MCF 10A (cell line): ENCODE measurements at regions of chr11 and their contacts with region 1.

Region 1: DNA sequence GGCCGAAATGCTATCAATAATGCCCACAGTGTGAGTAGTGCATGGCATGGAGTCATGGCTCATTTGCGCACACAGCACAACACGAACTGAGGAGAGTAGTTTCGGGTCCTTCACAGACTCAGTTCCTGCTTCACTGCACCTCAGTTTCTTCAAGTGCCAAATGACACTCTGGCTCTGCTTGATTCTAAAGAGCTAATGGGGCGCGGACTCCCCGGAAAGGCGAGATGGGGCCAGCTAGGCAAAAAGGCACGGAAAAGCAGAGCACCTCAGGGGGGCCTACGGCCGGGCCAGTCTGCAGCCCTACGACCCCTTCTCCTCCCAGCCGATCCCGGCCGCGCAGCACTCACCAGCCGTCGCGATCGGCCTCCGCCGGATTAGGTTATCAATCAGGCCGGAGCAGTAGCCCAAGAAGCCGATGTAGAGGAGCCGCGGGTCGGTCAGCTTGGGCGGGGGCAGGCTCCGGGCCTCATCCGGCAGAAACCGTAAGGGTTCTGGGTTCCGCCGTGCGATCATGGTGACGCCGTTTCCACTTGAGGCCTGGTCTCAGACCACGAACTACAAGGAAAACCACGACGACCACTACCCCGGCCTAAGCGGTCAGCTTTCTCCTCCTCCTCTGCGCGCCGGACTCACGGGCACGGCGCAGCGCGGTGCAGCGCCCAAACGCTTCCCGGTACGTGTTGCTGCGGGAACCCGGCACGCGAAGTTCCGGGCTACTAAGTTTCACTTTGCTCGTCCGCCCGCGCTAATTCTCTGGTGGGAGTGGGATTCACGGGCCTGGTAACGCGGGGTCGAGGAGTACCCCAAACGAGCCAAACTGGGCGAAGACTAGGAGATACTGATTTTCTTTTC is at the start of gene NDUFC2:
- DNase-seq: peak; percentile 72
- H3K4me3 Mint-ChIP-seq: peak within 1 kb of the TSS; percentile 83
- H3K27ac Mint-ChIP-seq: peak within 1 kb of the TSS; percentile 65
- H3K4me1 Mint-ChIP-seq: peaks cover 37% of the 10 kb centered on the region
- H3K27me3 Mint-ChIP-seq: no peaks in the 10 kb centered on the region
- CTCF ChIP-seq: no peak
- total RNA-seq, gene NDUFC2: 156 and 186 TPM in 2 replicates

Region 2: GRCh38 chr11:77470504-77470903 is 609.0 kb before region 1 on chr11:
- CTCF ChIA-PET with region 1: no interaction called
- POLR2A ChIA-PET with region 1: no interaction called
- intact Hi-C with region 1: no loop called
- DNase-seq: no peak
- H3K4me3 Mint-ChIP-seq: no peak overlapping the region
- H3K27ac Mint-ChIP-seq: no peak overlapping the region
- H3K4me1 Mint-ChIP-seq: peaks cover 6% of the 10 kb centered on the region
- H3K27me3 Mint-ChIP-seq: no peaks in the 10 kb centered on the region
- CTCF ChIP-seq: no peak

Region 3: GRCh38 chr11:78050964-78051831 is 28.3 kb before region 1 on chr11:
- CTCF ChIA-PET with region 1: interaction called, 17 read pairs
- POLR2A ChIA-PET with region 1: interaction called, 7 read pairs
- intact Hi-C with region 1: loop called (anchors 1 kb)
- DNase-seq: peak; percentile 76
- H3K4me3 Mint-ChIP-seq: no peak overlapping the region
- H3K27ac Mint-ChIP-seq: peak overlapping the region; percentile 79
- H3K4me1 Mint-ChIP-seq: peaks cover 15% of the 10 kb centered on the region
- H3K27me3 Mint-ChIP-seq: no peaks in the 10 kb centered on the region
- CTCF ChIP-seq: no peak

Region 4: GRCh38 chr11:78139422-78140391 is 60.2 kb after region 1 on chr11 and contains the start of gene ALG8:
- CTCF ChIA-PET with region 1: interaction called, 3 read pairs
- POLR2A ChIA-PET with region 1: interaction called, 24 read pairs
- intact Hi-C with region 1: no loop called
- DNase-seq: peak; percentile 93
- H3K4me3 Mint-ChIP-seq: peak within 1 kb of the TSS; percentile 93
- H3K27ac Mint-ChIP-seq: peak within 1 kb of the TSS; percentile 89
- H3K4me1 Mint-ChIP-seq: peaks cover 17% of the 10 kb centered on the region
- H3K27me3 Mint-ChIP-seq: no peaks in the 10 kb centered on the region
- CTCF ChIP-seq: no peak
- total RNA-seq, gene ALG8: 33.8 and 37.2 TPM in 2 replicates

Region 5: GRCh38 chr11:78432058-78432515 is 352.6 kb after region 1 on chr11:
- CTCF ChIA-PET with region 1: no interaction called
- POLR2A ChIA-PET with region 1: no interaction called
- intact Hi-C with region 1: no loop called
- DNase-seq: peak; percentile 30
- H3K4me3 Mint-ChIP-seq: no peak overlapping the region
- H3K27ac Mint-ChIP-seq: no peak overlapping the region
- H3K4me1 Mint-ChIP-seq: no peaks in the 10 kb centered on the region
- H3K27me3 Mint-ChIP-seq: no peaks in the 10 kb centered on the region
- CTCF ChIP-seq: peak; percentile 40